Cardiac septum (tissue), 1 donor: ENCODE measurements at regions of chr2 and their contacts with region 1.

Region 1: GRCh38 chr2:28392297-28393113 is at the start of gene FOSL2:
- DNase-seq: peak; percentile 98
- total RNA-seq, gene FOSL2: 65.4 TPM

Region 2: DNA sequence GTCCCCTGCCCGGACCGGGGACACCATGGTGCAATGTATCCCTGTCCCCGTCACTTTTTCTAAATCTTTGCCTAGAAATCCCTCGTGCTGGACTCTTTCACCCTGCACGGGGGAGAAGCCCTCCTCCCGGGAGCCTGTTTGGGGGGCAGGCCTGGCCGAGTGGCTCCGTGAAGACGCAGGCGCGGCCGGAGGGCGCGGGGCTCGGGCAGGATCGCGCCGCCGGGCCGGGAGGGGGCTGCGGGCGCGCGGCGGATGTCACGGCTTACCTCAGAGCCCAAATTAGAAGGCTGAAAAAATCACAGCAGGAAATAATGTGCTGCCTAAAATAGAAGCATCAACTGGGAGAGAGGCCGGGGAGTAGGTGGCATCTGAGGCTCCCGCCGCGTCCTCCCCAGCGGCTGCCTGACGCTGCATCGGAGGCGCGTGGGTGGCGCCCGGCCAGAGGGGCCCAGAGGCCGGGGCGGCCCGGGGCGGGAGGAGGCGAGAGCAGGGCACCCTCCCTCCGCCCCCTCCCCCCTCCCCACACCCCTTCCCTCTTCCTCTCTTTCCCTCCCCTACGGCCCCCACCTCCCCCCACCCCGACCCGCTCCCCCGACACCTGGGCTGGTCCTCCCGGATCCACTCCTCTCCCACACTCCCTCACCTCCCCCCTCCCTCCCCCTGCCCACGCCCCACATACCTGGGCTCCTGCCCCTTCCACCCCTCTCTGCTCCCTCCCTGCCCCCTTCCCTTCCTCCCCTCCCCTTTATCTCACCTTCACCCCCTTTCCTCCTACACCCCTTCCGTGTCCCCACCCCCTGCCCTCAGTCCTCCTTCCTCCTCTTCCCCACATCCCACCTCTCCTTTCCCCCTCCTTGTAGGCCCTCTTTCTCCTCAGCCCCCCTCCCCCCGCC is 676.9 kb before region 1 on chr2:
- intact Hi-C with region 1: loop called (anchors 2 kb)
- DNase-seq: peak; percentile 89

Region 3: GRCh38 chr2:27771548-27772335 is 620.8 kb before region 1 on chr2 and contains the start of gene MRPL33:
- intact Hi-C with region 1: loop called (anchors 5 kb)
- DNase-seq: peak; percentile 97
- total RNA-seq, gene MRPL33: 258 TPM

Region 4: GRCh38 chr2:27890146-27890923 is 502.2 kb before region 1 on chr2 and contains the starts of genes BABAM2 and RBKS:
- intact Hi-C with region 1: loop called (anchors 2 kb)
- DNase-seq: peak; percentile 95
- total RNA-seq, gene BABAM2: 63.4 TPM
- total RNA-seq, gene RBKS: 3.9 TPM

Region 5: GRCh38 chr2:28102455-28102874 is 290.0 kb before region 1 on chr2:
- intact Hi-C with region 1: loop called (anchors 1 kb)
- DNase-seq: no peak

Region 6: GRCh38 chr2:28274911-28275695 is 117.4 kb before region 1 on chr2:
- intact Hi-C with region 1: loop called (anchors 2 kb)
- DNase-seq: no peak

Region 7: GRCh38 chr2:28452534-28453081 is 60.1 kb after region 1 on chr2:
- intact Hi-C with region 1: loop called (anchors 5 kb)
- DNase-seq: peak; percentile 92